ENCODE measurements at regions of chr3 and their contacts with region 1.

Region 1: GRCh38 chr3:11335056-11335608 is 62.9 kb downstream of the ATG7 start:
- DNase-seq: peak; percentile 50
- H3K4me3 Mint-ChIP-seq: no peak overlapping the region
- H3K27ac Mint-ChIP-seq: no peak overlapping the region
- H3K4me1 Mint-ChIP-seq: peaks cover 7% of the 10 kb centered on the region
- H3K27me3 Mint-ChIP-seq: no peaks in the 10 kb centered on the region

Region 2: DNA sequence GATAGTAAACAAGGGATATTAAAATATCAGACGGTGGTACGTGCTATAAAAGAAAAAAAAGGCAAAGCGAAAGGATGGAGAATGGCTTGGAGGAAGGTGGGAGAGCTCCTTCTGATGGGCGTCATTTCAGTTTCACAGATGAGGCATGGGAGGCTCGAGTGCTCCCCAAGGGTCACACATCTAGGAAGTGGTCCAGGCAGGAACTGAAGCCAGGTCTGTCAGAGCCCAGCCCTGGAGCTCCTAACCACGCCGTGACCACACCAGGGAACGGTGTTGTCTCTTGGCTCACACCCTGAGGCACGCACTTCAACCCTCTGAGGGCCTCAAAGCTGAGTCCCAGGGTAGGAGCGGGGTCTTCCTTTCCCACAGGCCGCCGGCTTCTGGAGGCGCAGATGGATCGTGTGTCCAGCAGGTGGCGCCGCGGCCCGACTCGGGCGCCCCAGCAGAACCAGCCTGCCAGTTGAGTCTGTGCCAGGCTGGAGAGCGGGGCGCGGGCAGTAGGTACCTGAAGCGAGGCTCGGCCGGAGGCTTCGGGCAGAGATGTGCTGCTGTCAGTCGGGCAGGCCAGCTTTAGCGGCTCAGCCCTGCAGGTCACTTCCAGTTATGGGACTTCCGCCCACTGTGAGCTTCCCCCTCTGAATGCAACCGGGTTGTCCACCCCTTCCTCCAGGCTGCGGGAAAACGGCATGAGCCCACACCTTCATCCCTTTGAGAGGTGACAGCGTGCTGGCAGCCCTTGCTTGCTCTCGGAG is 274.5 kb before region 1 on chr3:
- CTCF ChIA-PET with region 1: interaction called, 11 read pairs
- POLR2A ChIA-PET with region 1: no interaction called
- DNase-seq: peak; percentile 52
- H3K4me3 Mint-ChIP-seq: no peak overlapping the region
- H3K27ac Mint-ChIP-seq: no peak overlapping the region
- H3K4me1 Mint-ChIP-seq: no peaks in the 10 kb centered on the region
- H3K27me3 Mint-ChIP-seq: peaks cover 10% of the 10 kb centered on the region

Region 3: DNA sequence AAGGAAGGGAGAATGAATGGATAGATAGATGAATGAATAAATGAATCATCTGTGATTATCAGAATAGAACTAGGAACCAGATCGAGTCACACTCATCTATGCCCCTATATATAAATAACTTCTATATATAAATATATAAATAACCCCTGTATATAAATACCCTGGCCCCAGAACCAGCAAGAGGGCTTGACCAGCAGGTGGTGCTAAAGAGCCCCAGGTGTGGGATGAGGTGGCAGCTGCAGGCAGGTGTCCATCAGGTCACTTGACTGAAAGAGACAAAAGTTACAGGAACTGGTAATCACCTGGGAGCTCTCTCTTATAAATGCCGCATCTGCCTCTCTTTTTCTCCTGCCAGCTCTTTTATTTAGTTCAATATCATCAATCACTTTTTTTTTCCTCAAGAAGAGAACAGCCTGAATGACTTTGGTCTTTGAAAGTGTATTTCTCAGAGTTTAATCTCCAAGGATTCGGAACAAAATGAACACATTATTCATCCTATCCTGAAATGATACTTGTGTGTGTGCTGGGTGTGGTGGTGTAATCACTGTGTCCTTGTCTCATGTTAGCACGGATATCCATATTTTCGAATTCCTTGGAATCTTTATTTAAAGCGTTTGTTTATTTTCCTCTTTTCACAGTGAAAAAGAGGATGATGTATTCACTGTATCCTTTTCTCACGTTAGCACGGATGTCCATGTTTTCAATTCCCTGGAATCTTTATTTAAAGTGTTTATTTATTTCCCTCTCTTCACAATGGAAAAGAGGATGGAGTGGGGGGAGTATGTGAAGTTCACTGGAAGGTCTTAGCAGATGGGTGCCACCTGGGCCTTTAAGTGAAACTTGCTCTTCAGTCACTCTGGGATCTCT is 98.3 kb before region 1 on chr3:
- CTCF ChIA-PET with region 1: interaction called, 17 read pairs
- POLR2A ChIA-PET with region 1: no interaction called
- DNase-seq: peak; percentile 81
- H3K4me3 Mint-ChIP-seq: no peak overlapping the region
- H3K27ac Mint-ChIP-seq: no peak overlapping the region
- H3K4me1 Mint-ChIP-seq: peaks cover 14% of the 10 kb centered on the region
- H3K27me3 Mint-ChIP-seq: peaks cover 14% of the 10 kb centered on the region

Measured in activated CD4-positive, alpha-beta T cell treated with anti-CD3 and anti-CD28 coated beads, Interleukin-2, amount 10 ng/mL, durations not matched to agents 7 days and 5 days (primary cell).